ENCODE measurements at regions of chr7 and their contacts with region 1.

Region 1: DNA sequence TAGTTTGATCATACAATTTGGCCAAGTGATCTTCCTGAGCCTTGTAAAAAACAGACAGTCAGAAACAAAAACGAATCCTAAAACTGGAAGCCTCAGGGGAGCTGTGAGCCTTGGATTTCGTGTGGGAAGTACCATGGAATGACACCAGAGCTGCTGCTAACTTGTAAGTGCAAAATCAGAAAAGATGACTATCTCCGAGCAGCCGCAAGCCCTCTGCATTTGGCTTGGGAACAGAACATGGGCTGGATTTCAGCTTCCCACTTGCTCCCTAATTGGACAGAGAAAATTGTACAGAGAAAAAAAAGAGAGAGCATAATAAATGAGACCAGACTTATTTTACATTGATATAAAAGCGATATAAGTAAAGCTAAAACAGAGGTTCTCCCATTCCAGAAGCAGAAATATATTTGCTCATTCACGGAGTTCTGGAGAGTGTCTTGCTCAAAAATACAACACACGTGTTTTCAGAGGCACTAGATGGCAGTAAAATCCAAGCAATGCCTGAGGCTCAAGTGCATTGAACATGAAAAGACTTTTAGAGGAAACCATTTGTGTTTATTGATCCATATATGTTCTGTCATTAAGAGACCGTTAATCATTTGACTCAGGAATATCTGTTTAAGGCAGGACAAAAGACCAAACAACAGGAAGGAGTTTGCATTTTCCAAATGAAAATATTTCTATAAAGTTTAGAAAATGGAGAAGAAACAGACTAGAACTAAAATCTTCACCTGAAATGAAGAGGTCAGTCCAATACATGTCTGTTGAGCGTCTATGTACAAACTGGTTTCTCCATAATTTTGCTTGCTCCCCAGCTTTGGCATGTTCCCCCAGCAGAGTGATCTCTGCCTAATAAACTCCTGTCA is 78.3 kb upstream of the SLC26A5 start:
- DNase-seq: peak; percentile 68
- ATAC-seq: peak; percentile 55; the same call in 1 of the 2 replicates
- H3K4me3 ChIP-seq: no peak overlapping the region
- H3K27ac ChIP-seq: no peak overlapping the region
- H3K4me1 ChIP-seq: 0 out of 2 replicates have a peak, but pooled peaks cover 2% of the 10 kb centered on the region
- H3K27me3 ChIP-seq: no peaks in the 10 kb centered on the region; the same call in 1 of the 2 replicates
- CTCF ChIP-seq: peak; percentile 74
- POLR2A ChIP-seq: 0 out of 2 replicates have a peak, but pooled peaks have one; percentile 26
- RAD21 ChIP-seq: peak; percentile 93

Region 2: DNA sequence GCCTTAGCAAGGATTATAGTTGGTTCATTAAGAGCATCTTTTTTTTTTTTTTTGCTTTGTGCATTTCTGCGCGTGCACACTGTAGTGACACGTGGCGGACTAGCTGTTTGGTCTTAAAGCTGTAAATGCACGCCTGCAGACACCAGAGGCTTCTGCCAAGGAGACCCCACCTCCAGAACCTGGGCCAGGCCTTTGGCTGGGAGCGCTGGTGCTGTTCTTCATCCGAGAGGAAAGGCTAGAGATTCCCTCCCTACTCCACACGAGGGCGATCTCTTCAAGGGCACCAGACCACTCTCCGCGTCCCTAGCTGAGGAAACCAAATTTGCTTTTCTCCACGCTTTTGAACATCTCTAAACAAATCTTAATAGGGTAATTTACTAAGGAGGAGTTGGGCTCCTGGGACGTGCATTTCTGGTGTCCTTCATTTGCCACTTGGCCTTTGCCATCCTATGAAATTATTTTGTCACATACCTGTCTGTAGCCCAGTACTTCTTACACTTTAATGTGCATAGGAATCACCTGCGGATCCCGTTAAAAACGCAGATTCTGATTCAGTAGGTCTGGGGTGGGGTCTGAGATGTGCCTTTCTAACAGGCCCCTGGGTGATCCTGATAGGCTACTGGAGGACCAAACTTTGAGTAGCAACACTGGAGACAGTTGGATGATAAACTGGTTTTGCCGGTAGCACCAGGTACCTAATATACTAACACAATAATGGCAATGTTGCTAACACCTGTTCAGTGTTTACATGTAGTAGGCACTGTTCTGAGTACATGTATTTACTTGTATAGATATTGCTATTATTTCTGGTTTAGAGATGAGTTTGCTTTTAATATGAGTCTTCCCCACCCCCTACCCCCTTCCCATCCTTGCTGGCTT is 77.0 kb before region 1 on chr7:
- CTCF ChIA-PET with region 1: no interaction called
- POLR2A ChIA-PET with region 1: no interaction called
- dilution Hi-C with region 1: no loop called
- in situ Hi-C with region 1: no loop called
- intact Hi-C with region 1: loop called (anchors 2 kb)
- DNase-seq: peak; percentile 62
- ATAC-seq: peak; percentile 90
- H3K4me3 ChIP-seq: no peak overlapping the region
- H3K27ac ChIP-seq: no peak overlapping the region
- H3K4me1 ChIP-seq: peaks cover 4% of the 10 kb centered on the region; the same call in 1 of the 2 replicates
- H3K27me3 ChIP-seq: peaks cover 27% of the 10 kb centered on the region
- CTCF ChIP-seq: peak; percentile 83
- POLR2A ChIP-seq: no peak
- RAD21 ChIP-seq: peak; percentile 81

Region 3: DNA sequence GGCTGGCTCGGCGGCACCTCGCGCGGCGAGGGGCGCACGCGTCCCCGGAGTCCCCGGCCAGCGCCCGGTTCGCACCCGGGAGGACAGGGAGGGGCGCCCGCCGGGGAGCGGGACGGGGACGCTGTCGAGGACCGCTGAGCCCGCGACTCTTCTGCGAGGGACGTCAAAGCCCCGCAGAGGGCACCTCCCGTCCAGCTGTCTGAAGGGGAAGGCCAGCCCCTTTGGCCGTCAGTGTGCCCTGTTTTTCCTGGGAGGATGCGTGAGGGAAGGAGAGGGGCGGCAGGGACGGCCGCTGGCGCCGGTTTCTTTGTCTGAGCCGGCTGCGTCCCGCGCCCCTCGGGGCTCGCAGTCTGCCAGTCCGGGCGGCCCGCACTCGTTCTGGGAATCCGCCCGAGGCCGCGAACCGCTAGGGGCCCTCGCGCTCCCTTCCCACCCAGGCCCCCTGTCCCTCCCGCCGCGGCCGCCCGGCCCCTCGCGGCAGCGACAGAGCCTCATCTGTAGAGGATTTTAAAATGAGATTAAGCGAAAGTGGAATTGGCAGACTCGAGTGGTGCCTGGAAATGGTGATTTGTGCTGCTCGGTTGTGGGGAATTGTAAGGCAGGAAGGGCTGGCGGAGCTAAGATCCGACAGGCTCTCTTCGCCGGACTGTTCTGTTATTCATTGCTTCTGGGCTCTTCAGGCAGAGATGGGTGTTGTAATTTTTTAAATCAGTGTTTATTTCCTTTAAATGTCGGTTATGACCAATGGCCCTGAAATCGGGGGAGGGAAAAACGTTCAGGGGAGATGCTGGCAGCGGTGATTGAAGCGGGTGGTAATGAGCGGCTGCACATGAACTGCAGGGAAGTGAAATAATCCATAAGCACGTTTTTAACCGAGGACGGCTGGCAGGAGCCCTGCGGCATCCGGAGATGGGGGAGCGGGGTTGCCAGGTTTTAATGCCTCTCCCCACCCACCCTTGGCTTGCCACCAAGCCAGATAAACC is 465.8 kb after region 1 on chr7:
- CTCF ChIA-PET with region 1: no interaction called
- POLR2A ChIA-PET with region 1: no interaction called
- dilution Hi-C with region 1: no loop called
- in situ Hi-C with region 1: no loop called
- intact Hi-C with region 1: loop called (anchors 5 kb)
- DNase-seq: peak; percentile 47
- ATAC-seq: peak; percentile 65
- H3K4me3 ChIP-seq: peak overlapping the region; percentile 78
- H3K27ac ChIP-seq: peak overlapping the region; percentile 66
- H3K4me1 ChIP-seq: peaks cover 5% of the 10 kb centered on the region; the same call in 1 of the 2 replicates
- H3K27me3 ChIP-seq: no peaks in the 10 kb centered on the region; the same call in 1 of the 2 replicates
- CTCF ChIP-seq: 0 out of 2 replicates have a peak, but pooled peaks have one; percentile 5
- POLR2A ChIP-seq: no peak
- RAD21 ChIP-seq: no peak

Region 4: DNA sequence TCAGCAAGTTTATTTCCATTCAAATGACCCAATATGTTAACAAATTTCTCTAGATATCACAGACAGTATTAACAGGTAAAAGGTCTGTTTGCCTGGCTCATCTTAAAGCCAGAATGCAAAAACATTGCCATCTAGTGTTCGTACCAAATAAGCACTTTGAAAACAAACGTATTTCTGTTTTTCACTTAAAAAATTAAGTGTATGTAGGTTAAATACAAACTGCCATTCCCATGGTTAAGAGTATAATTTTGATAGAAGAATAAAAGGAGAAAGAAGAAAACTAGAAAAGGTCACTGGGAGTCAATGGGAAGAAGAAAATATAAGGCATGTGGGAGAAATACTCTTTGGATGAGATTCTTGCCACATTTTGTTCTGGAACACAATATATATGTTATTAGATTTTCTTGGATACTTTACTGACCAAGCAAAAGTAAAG is 632.6 kb after region 1 on chr7:
- CTCF ChIA-PET with region 1: interaction called, 4 read pairs
- POLR2A ChIA-PET with region 1: no interaction called
- dilution Hi-C with region 1: no loop called
- in situ Hi-C with region 1: loop called (anchors 5 kb)
- intact Hi-C with region 1: loop called (anchors 1 kb)
- DNase-seq: peak; percentile 57
- ATAC-seq: no peak
- H3K4me3 ChIP-seq: no peak overlapping the region
- H3K27ac ChIP-seq: no peak overlapping the region
- H3K4me1 ChIP-seq: no peaks in the 10 kb centered on the region
- H3K27me3 ChIP-seq: no peaks in the 10 kb centered on the region
- CTCF ChIP-seq: peak; percentile 70
- POLR2A ChIP-seq: no peak
- RAD21 ChIP-seq: peak; percentile 72

Region 5: GRCh38 chr7:104252404-104253134 is 728.3 kb after region 1 on chr7:
- CTCF ChIA-PET with region 1: no interaction called
- POLR2A ChIA-PET with region 1: no interaction called
- dilution Hi-C with region 1: no loop called
- in situ Hi-C with region 1: no loop called
- intact Hi-C with region 1: loop called (anchors 10 kb)
- DNase-seq: no peak
- ATAC-seq: no peak; the same call in 1 of the 2 replicates
- H3K4me3 ChIP-seq: no peak overlapping the region
- H3K27ac ChIP-seq: no peak overlapping the region
- H3K4me1 ChIP-seq: no peaks in the 10 kb centered on the region
- H3K27me3 ChIP-seq: peaks cover 4% of the 10 kb centered on the region
- CTCF ChIP-seq: no peak
- POLR2A ChIP-seq: no peak
- RAD21 ChIP-seq: no peak

Region 6: GRCh38 chr7:104848138-104848990 is 1324.1 kb after region 1 on chr7:
- CTCF ChIA-PET with region 1: no interaction called
- POLR2A ChIA-PET with region 1: no interaction called
- dilution Hi-C with region 1: no loop called
- in situ Hi-C with region 1: no loop called
- intact Hi-C with region 1: loop called (anchors 10 kb)
- DNase-seq: peak; percentile 34
- ATAC-seq: peak; percentile 95
- H3K4me3 ChIP-seq: no peak overlapping the region
- H3K27ac ChIP-seq: no peak overlapping the region
- H3K4me1 ChIP-seq: no peaks in the 10 kb centered on the region
- H3K27me3 ChIP-seq: peaks cover 32% of the 10 kb centered on the region
- CTCF ChIP-seq: peak; percentile 68
- POLR2A ChIP-seq: no peak
- RAD21 ChIP-seq: peak; percentile 60